GM12878 (cell line): ENCODE measurements at regions of chr19 and their contacts with region 1.

Region 1: GRCh38 chr19:4108767-4109625 is 14.9 kb downstream of the MAP2K2 start:
- DNase-seq: peak; percentile 79
- ATAC-seq: peak; percentile 94
- H3K4me3 ChIP-seq: 0 out of 2 replicates have a peak overlapping the region, but pooled peaks have one; percentile 26
- H3K27ac ChIP-seq: peak overlapping the region; percentile 95
- H3K4me1 ChIP-seq: peaks cover 32% of the 10 kb centered on the region
- H3K27me3 ChIP-seq: no peaks in the 10 kb centered on the region
- CTCF ChIP-seq: no peak
- EP300 ChIP-seq: peak; percentile 63 to 65; a peak in 2 of 4 replicates
- POLR2A ChIP-seq: peak; percentile 73; the same call in 1 of the 2 replicates
- RAD21 ChIP-seq: peak; percentile 8; the same call in 1 of the 2 replicates

Region 2: DNA sequence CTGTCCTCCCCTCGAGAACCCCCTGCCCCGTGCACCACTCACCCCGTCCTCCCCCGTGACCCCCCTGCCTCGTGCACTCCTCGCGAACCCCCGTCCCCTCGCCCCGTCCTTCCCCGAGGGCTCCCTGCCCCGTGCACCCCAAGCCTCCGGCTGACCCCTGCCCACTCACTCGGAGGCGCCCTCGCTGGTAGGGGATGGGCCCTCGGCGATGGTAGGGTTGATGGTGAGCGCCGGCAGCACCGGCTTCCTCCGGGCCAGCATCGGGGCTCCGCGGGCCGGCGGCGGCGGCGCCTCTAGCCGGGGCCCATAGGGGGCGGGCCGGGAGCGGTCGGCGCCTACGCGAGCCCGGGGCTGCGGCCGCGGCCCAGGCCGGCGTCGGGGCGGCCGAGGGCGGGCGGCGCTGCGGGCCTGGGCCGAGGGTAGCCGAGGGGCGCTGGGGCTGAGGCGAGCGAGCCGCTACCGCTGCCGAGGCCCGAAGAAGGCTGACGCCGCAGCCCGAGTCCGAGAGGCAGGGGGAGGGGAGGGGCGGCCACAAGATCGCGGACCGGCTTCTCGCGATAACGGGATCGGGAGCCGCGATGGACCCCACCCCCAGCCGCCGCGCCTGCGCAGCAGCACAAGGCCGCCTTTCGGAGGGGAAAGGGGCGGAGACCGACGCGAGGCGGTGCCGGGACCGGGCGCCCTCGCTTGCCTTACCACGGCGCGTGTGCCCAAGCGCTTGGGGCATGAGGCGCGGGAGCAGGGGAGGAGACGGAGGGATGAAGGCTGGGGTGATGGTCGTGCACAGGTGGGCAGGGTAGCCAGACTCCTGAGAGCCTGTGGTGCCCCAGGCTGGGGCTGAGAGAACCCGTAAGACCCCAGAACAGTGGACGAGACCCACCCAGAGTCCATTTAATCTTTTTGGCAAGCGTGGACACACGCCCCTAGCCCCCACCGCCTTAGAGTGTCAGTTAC is 14.9 kb after region 1 on chr19 and contains the start of gene MAP2K2:
- CTCF ChIA-PET with region 1: interaction called, 5 read pairs
- POLR2A ChIA-PET with region 1: interaction called, 9 read pairs
- RAD21 ChIA-PET with region 1: interaction called, 3 read pairs
- SMC1A ChIA-PET with region 1: interaction called, 11 read pairs
- in situ Hi-C with region 1: no loop called
- intact Hi-C with region 1: no loop called
- DNase-seq: peak; percentile 60
- ATAC-seq: peak; percentile 97
- H3K4me3 ChIP-seq: peak within 1 kb of the TSS; percentile 99
- H3K27ac ChIP-seq: peak within 1 kb of the TSS; percentile 78
- H3K4me1 ChIP-seq: no peaks in the 10 kb centered on the region; the same call in 1 of the 2 replicates
- H3K27me3 ChIP-seq: no peaks in the 10 kb centered on the region
- CTCF ChIP-seq: no peak
- EP300 ChIP-seq: no peak
- POLR2A ChIP-seq: peak; percentile 87
- RAD21 ChIP-seq: no peak
- polyA plus RNA-seq, gene MAP2K2: 1.00 to 6.8 TPM

Region 3: GRCh38 chr19:4431808-4432674 is 323.0 kb after region 1 on chr19:
- CTCF ChIA-PET with region 1: no interaction called
- POLR2A ChIA-PET with region 1: no interaction called
- RAD21 ChIA-PET with region 1: no interaction called
- SMC1A ChIA-PET with region 1: no interaction called
- in situ Hi-C with region 1: no loop called
- intact Hi-C with region 1: no loop called
- DNase-seq: peak; percentile 12
- ATAC-seq: peak; percentile 43
- H3K4me3 ChIP-seq: no peak overlapping the region
- H3K27ac ChIP-seq: peak overlapping the region; percentile 74
- H3K4me1 ChIP-seq: peaks cover 21% of the 10 kb centered on the region
- H3K27me3 ChIP-seq: no peaks in the 10 kb centered on the region
- CTCF ChIP-seq: no peak
- EP300 ChIP-seq: no peak
- POLR2A ChIP-seq: peak; percentile 48
- RAD21 ChIP-seq: no peak